H1 (cell line): ENCODE measurements at regions of chr17 and their contacts with region 1.

Region 1: GRCh38 chr17:5419356-5419958 is at the start of gene NUP88:
- DNase-seq: peak; percentile 91 to 93
- H3K4me3 ChIP-seq: peak within 1 kb of the TSS; percentile 67 to 99 (median 97)
- H3K27ac ChIP-seq: peak within 1 kb of the TSS; percentile 95
- H3K4me1 ChIP-seq: peaks cover 0 to 4% (median 2%) of the 10 kb centered on the region in 4 experiments; a peak in 3 of 7 replicates
- H3K27me3 ChIP-seq: no peaks in the 10 kb centered on the region
- CTCF ChIP-seq: no peak
- EP300 ChIP-seq: no peak
- POLR2A ChIP-seq: peak; percentile 67 to 94
- RAD21 ChIP-seq: no peak
- total RNA-seq, gene NUP88: 102 and 105 TPM in 2 replicates

Region 2: DNA sequence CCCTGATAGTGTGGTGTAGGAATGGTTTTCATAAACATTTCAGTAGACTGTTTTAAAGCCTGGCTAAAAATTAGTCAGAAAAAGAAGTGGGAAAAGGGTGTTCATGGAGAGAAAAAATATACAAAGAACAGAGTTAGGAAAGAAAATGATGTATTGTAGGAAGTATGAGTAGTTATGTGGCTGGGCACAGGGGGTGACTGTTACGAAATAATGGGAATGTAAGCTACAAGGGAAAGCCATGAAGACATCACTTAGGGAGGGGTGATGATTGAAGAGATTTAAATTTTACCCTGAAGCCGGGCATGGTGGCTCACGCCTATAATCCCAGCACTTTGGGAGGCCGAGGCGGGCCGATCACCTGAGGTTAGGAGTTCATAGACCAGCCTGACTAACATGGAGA is 55.3 kb before region 1 on chr17:
- CTCF ChIA-PET with region 1: no interaction called
- POLR2A ChIA-PET with region 1: no interaction called
- DNase-seq: no peak
- H3K4me3 ChIP-seq: no peak overlapping the region
- H3K27ac ChIP-seq: no peak overlapping the region
- H3K4me1 ChIP-seq: peaks cover 1 to 14% (median 10%) of the 10 kb centered on the region in 4 experiments; a peak in 5 of 7 replicates
- H3K27me3 ChIP-seq: no peaks in the 10 kb centered on the region
- CTCF ChIP-seq: no peak
- EP300 ChIP-seq: no peak
- POLR2A ChIP-seq: no peak
- RAD21 ChIP-seq: no peak

Region 3: GRCh38 chr17:5405400-5405799 is 14.1 kb before region 1 on chr17:
- CTCF ChIA-PET with region 1: interaction called, 3 read pairs
- POLR2A ChIA-PET with region 1: interaction called, 51 read pairs
- DNase-seq: no peak
- H3K4me3 ChIP-seq: no peak overlapping the region
- H3K27ac ChIP-seq: no peak overlapping the region
- H3K4me1 ChIP-seq: no peaks in the 10 kb centered on the region
- H3K27me3 ChIP-seq: no peaks in the 10 kb centered on the region
- CTCF ChIP-seq: no peak
- EP300 ChIP-seq: no peak
- POLR2A ChIP-seq: no peak
- RAD21 ChIP-seq: no peak

Region 4: GRCh38 chr17:5438716-5439445 is 19.4 kb after region 1 on chr17 and contains the start of gene C1QBP:
- CTCF ChIA-PET with region 1: interaction called, 13 read pairs
- POLR2A ChIA-PET with region 1: interaction called, 228 read pairs
- DNase-seq: peak; percentile 88 to 99
- H3K4me3 ChIP-seq: peak within 1 kb of the TSS; percentile 74 to 99 (median 90)
- H3K27ac ChIP-seq: no peak within 1 kb of the TSS
- H3K4me1 ChIP-seq: no peaks in the 10 kb centered on the region; a peak in 1 of 7 replicates
- H3K27me3 ChIP-seq: no peaks in the 10 kb centered on the region
- CTCF ChIP-seq: peak; percentile 63 to 98 (median 97)
- EP300 ChIP-seq: no peak
- POLR2A ChIP-seq: peak; percentile 45 to 82
- RAD21 ChIP-seq: peak; percentile 21 to 38; a peak in 3 of 4 replicates
- total RNA-seq, gene C1QBP: 453 and 454 TPM in 2 replicates